H1 (cell line): ENCODE measurements at regions of chr3 and their contacts with region 1.

Region 1: GRCh38 chr3:149352556-149352955 is 19.1 kb upstream of the TM4SF18 start:
- DNase-seq: peak; percentile 66 to 83
- H3K4me3 ChIP-seq: no peak overlapping the region
- H3K27ac ChIP-seq: no peak overlapping the region
- H3K4me1 ChIP-seq: no peaks in the 10 kb centered on the region
- H3K27me3 ChIP-seq: no peaks in the 10 kb centered on the region
- CTCF ChIP-seq: peak; percentile 70 to 92 (median 90)
- EP300 ChIP-seq: no peak; a peak in 1 of 3 replicates
- POLR2A ChIP-seq: no peak
- RAD21 ChIP-seq: peak; percentile 81 to 94

Region 2: GRCh38 chr3:149339931-149340309 is 12.6 kb before region 1 on chr3:
- CTCF ChIA-PET with region 1: interaction called, 43 read pairs
- POLR2A ChIA-PET with region 1: no interaction called
- DNase-seq: peak in 1 of 2 experiments; percentile 58
- H3K4me3 ChIP-seq: no peak overlapping the region
- H3K27ac ChIP-seq: no peak overlapping the region
- H3K4me1 ChIP-seq: peaks cover 0 to 3% (median 2%) of the 10 kb centered on the region in 4 experiments; a peak in 4 of 7 replicates
- H3K27me3 ChIP-seq: no peaks in the 10 kb centered on the region
- CTCF ChIP-seq: no peak
- EP300 ChIP-seq: no peak
- POLR2A ChIP-seq: no peak
- RAD21 ChIP-seq: no peak

Region 3: DNA sequence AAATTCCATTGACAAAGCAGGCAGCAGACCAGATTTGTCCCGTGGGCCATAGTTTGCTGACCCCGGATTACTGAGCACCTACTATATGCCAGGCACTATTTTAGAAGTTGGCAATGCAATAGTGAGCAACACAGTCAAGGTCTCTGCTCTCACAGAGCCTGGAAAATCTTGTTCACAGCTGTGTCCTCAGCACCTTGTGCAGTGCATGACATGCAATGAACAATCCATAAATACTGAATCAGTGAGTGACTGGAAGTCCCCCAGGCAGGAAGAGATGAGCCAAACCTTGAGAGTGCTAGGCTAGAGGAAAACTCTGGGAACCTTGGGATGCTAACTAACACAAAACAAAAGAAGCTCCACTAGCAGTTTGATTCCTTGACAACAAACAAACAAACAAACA is 10.5 kb after region 1 on chr3:
- CTCF ChIA-PET with region 1: interaction called, 20 read pairs
- POLR2A ChIA-PET with region 1: no interaction called
- DNase-seq: no peak
- H3K4me3 ChIP-seq: no peak overlapping the region
- H3K27ac ChIP-seq: no peak overlapping the region
- H3K4me1 ChIP-seq: peaks cover 0 to 10% (median 0%) of the 10 kb centered on the region in 4 experiments; a peak in 1 of 7 replicates
- H3K27me3 ChIP-seq: no peaks in the 10 kb centered on the region
- CTCF ChIP-seq: no peak
- EP300 ChIP-seq: no peak
- POLR2A ChIP-seq: no peak
- RAD21 ChIP-seq: no peak

Region 4: GRCh38 chr3:149371001-149371722 is 18.6 kb after region 1 on chr3:
- CTCF ChIA-PET with region 1: interaction called, 19 read pairs
- POLR2A ChIA-PET with region 1: no interaction called
- DNase-seq: no peak
- H3K4me3 ChIP-seq: no peak overlapping the region
- H3K27ac ChIP-seq: 0 out of 2 replicates have a peak overlapping the region, but pooled peaks have one; percentile 40
- H3K4me1 ChIP-seq: peaks cover 1 to 26% (median 20%) of the 10 kb centered on the region in 4 experiments
- H3K27me3 ChIP-seq: no peaks in the 10 kb centered on the region
- CTCF ChIP-seq: 0 out of 4 replicates have a peak, but pooled peaks of 1 of the 3 experiments have one; percentile 11
- EP300 ChIP-seq: no peak
- POLR2A ChIP-seq: no peak
- RAD21 ChIP-seq: peak in 1 of 2 experiments; percentile 26; a peak in 2 of 4 replicates

Region 5: DNA sequence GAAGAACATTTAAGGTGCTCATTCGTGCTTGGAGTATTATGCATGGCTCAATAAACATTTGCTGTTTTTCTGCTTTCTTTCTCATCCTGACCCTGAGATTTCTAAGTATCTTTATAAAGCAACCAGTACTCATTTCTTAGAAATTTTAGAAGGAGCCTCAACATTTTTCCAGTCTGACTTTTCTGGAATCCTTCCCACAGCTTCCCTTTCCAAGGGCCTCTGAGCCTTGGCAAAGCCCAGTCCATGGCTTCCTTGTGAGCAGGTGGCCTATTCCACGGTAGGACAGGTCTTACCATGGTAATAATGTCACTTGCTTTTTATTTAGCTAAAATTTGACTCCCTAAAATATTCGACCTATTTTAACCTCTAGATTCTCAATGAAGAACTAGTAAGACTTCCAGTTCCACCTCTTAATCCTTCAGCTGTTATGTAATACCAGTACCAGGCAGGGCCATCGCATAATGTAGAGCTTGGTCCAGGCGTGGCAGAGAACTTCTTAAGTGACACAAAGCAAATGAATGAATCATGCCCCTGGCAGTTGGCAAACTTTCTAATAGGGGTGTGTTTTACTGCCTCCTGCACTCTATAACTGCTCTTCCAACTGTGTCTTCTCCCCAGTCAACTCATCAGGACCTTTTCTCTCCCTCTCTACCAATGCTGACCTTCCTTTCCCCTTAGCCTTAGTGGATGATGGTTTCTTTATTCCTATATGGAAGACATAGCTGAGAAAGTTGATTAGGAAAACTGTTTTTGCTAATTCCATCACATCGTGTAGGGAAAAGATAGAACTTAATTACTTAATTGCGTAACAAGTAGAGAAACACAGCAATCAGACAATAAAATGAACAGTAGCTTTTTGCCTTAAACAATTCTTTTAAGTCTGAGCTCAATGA is 121.0 kb after region 1 on chr3:
- CTCF ChIA-PET with region 1: interaction called, 53 read pairs
- POLR2A ChIA-PET with region 1: no interaction called
- DNase-seq: no peak
- H3K4me3 ChIP-seq: no peak overlapping the region
- H3K27ac ChIP-seq: no peak overlapping the region
- H3K4me1 ChIP-seq: peaks cover 0 to 2% (median 0%) of the 10 kb centered on the region in 4 experiments; a peak in 4 of 7 replicates
- H3K27me3 ChIP-seq: no peaks in the 10 kb centered on the region
- CTCF ChIP-seq: no peak
- EP300 ChIP-seq: no peak
- POLR2A ChIP-seq: no peak
- RAD21 ChIP-seq: no peak

Region 6: DNA sequence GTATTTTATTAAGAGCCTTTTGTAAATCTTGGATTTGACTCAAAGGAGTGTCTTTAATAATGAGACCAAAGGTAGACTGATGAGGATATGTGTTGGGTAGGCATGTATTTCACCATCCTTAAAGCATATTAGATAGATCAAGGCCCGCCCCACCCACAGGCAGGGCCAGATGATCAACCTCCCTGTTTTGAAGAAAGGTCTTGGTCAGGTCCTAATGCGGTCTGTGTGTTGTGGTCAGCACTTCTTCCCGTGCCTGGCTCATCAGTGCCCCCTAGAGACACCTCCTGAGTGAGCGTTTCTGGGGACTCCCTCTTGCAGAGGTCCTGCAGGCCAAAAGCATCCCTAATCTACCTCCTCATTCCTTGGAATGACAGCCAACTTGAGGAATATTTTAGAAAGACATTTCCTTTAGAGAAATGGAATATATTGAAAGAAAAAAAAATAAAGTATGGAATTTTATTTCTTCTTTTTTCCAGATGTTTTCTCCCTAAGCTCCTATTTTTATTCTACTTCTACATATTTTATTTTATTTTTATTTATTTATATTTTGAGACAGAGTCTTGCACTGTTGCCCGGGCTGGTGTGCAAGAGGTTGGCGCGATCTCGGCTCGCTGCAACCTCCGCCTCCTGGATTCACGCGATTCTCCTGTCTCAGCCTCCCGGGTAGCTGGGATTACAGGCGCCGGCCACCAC is 127.9 kb after region 1 on chr3:
- CTCF ChIA-PET with region 1: interaction called, 107 read pairs
- POLR2A ChIA-PET with region 1: no interaction called
- DNase-seq: peak; percentile 80 to 90
- H3K4me3 ChIP-seq: no peak overlapping the region
- H3K27ac ChIP-seq: no peak overlapping the region
- H3K4me1 ChIP-seq: no peaks in the 10 kb centered on the region
- H3K27me3 ChIP-seq: no peaks in the 10 kb centered on the region
- CTCF ChIP-seq: peak; percentile 90 to 95 (median 92)
- EP300 ChIP-seq: no peak
- POLR2A ChIP-seq: no peak
- RAD21 ChIP-seq: peak; percentile 93 to 95

Region 7: DNA sequence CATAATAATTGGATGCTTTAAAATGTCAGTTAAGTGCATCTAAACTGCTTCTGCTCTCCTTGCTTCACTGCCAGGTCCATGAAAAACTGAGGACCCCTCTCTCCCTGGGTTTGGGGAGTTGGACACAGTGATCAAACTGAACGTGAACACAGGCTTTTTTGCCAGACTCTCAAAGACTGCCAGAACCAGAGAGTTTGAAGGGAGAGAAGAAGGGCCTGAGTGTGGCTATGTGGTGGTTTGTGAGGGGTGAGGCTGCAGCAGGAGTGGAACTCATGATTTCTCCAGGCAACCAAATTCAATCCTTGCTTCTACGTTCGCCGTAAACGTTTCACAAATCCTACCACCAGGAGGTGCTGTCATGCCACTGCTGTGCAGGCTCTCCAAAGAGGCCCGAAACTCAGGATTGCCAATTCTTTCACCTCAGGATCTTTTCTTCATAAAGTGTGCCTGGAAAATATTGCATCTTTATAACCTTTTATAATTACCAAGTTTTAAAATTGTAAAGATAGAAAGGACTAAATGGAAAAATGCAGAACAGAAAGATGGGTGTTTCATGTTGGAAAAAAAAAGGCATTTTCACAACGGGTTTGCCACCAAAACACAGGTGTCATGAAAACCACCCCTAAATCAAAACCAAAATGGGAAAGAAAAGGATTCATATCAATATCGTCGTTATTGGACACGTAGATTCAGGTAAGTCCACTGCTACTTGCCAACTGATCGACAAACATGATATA is 141.6 kb after region 1 on chr3:
- CTCF ChIA-PET with region 1: interaction called, 107 read pairs
- POLR2A ChIA-PET with region 1: no interaction called
- DNase-seq: peak; percentile 51 to 88
- H3K4me3 ChIP-seq: no peak overlapping the region
- H3K27ac ChIP-seq: no peak overlapping the region
- H3K4me1 ChIP-seq: peaks cover 0 to 3% (median under 1%) of the 10 kb centered on the region in 4 experiments; a peak in 3 of 7 replicates
- H3K27me3 ChIP-seq: no peaks in the 10 kb centered on the region
- CTCF ChIP-seq: peak; percentile 77 to 89 (median 86)
- EP300 ChIP-seq: no peak
- POLR2A ChIP-seq: no peak
- RAD21 ChIP-seq: peak; percentile 96 to 98